Caco-2 (cell line): ENCODE measurements at regions of chr10 and their contacts with region 1.

Region 1: DNA sequence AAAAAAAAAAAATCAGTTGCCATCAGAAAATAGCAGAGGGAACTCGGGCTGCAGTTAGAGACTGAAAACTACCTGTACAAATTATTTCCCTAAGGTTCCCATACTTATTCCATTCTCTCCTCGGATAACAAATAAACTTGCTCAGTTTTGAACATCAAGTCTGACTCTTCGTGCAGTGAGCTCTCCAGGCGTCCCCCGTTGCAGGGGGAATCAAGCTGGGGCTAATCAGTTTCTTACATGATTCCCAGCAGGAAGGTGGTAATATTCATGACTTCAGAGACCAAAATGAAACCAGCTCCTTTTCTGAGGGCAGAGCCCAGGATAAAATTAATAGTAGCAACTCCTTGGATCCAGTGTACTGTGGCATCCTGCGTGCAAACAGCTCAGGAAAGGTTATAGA is 135.3 kb downstream of the FRMD4A start:
- DNase-seq: no peak
- H3K4me3 ChIP-seq: no peak overlapping the region
- H3K4me3 Mint-ChIP-seq: no peak overlapping the region
- H3K27ac Mint-ChIP-seq: no peak overlapping the region
- H3K4me1 ChIP-seq: no peaks in the 10 kb centered on the region
- H3K4me1 Mint-ChIP-seq: peaks cover 9% of the 10 kb centered on the region
- H3K27me3 ChIP-seq: no peaks in the 10 kb centered on the region
- H3K27me3 Mint-ChIP-seq: no peaks in the 10 kb centered on the region
- CTCF ChIP-seq: no peak

Region 2: DNA sequence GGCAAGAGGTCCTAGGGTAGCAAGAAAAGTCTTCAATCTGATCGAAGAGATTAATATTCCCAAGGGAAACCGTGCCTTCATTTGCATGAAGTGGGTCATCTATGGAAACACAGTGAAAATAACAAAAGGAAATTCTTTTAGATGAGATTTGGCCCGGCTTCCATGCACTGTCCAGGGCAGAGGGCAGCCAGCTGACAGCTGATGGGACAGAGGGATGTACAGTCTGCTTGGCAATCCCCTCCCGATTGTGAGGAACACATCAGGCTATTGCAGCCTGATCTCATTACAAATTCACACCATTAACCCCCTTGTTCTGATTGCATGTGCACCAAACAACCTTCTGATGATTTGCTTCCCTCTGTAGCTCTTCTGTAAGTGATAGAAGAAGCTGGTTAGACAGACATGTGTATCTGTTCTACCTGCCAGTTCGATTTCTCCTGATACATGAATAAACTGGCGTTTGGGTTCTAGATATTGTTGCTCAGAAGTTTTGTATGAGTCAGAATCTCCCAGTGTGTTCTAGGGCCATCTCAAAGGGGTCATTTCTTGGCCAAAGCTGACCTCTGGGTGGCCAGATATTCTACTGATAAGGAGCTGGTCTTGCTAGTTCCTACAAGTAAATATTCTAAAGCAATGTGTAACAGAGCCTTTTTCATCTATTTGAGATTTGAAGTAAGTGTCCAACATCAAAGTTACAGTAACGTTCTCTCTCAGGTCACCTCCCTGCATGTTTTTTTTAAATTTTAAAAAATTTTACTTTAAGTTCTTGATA is 30.1 kb after region 1 on chr10:
- CTCF ChIA-PET with region 1: interaction called, 5 read pairs
- POLR2A ChIA-PET with region 1: no interaction called
- intact Hi-C with region 1: loop called (anchors 2 kb)
- DNase-seq: peak; percentile 26 to 51
- H3K4me3 ChIP-seq: no peak overlapping the region
- H3K4me3 Mint-ChIP-seq: no peak overlapping the region
- H3K27ac Mint-ChIP-seq: peak overlapping the region; percentile 12
- H3K4me1 ChIP-seq: peaks cover 46% of the 10 kb centered on the region
- H3K4me1 Mint-ChIP-seq: peaks cover 34% of the 10 kb centered on the region
- H3K27me3 ChIP-seq: no peaks in the 10 kb centered on the region
- H3K27me3 Mint-ChIP-seq: no peaks in the 10 kb centered on the region
- CTCF ChIP-seq: no peak

Region 3: GRCh38 chr10:14240253-14241189 is 45.1 kb after region 1 on chr10:
- CTCF ChIA-PET with region 1: interaction called, 11 read pairs
- POLR2A ChIA-PET with region 1: no interaction called
- intact Hi-C with region 1: loop called (anchors 1 kb)
- DNase-seq: no peak
- H3K4me3 ChIP-seq: no peak overlapping the region
- H3K4me3 Mint-ChIP-seq: no peak overlapping the region
- H3K27ac Mint-ChIP-seq: no peak overlapping the region
- H3K4me1 ChIP-seq: no peaks in the 10 kb centered on the region; the same call in 1 of the 2 replicates
- H3K4me1 Mint-ChIP-seq: peaks cover 7% of the 10 kb centered on the region
- H3K27me3 ChIP-seq: no peaks in the 10 kb centered on the region
- H3K27me3 Mint-ChIP-seq: no peaks in the 10 kb centered on the region
- CTCF ChIP-seq: peak; percentile 12 to 21

Region 4: GRCh38 chr10:14259696-14260566 is 64.5 kb after region 1 on chr10:
- CTCF ChIA-PET with region 1: no interaction called
- POLR2A ChIA-PET with region 1: no interaction called
- intact Hi-C with region 1: loop called (anchors 5 kb)
- DNase-seq: peak; percentile 60 to 70
- H3K4me3 ChIP-seq: no peak overlapping the region
- H3K4me3 Mint-ChIP-seq: no peak overlapping the region
- H3K27ac Mint-ChIP-seq: no peak overlapping the region
- H3K4me1 ChIP-seq: peaks cover 15% of the 10 kb centered on the region; the same call in 1 of the 2 replicates
- H3K4me1 Mint-ChIP-seq: peaks cover 7% of the 10 kb centered on the region
- H3K27me3 ChIP-seq: no peaks in the 10 kb centered on the region
- H3K27me3 Mint-ChIP-seq: no peaks in the 10 kb centered on the region
- CTCF ChIP-seq: no peak

Region 5: GRCh38 chr10:14971867-14972448 is 776.5 kb after region 1 on chr10:
- CTCF ChIA-PET with region 1: no interaction called
- POLR2A ChIA-PET with region 1: no interaction called
- intact Hi-C with region 1: loop called (anchors 5 kb)
- DNase-seq: peak; percentile 63 to 77
- H3K4me3 ChIP-seq: no peak overlapping the region
- H3K4me3 Mint-ChIP-seq: no peak overlapping the region
- H3K27ac Mint-ChIP-seq: no peak overlapping the region
- H3K4me1 ChIP-seq: no peaks in the 10 kb centered on the region
- H3K4me1 Mint-ChIP-seq: no peaks in the 10 kb centered on the region
- H3K27me3 ChIP-seq: no peaks in the 10 kb centered on the region
- H3K27me3 Mint-ChIP-seq: no peaks in the 10 kb centered on the region
- CTCF ChIP-seq: peak; percentile 78 to 90